ENCODE measurements at regions of chr17 and their contacts with region 1.

Region 1: DNA sequence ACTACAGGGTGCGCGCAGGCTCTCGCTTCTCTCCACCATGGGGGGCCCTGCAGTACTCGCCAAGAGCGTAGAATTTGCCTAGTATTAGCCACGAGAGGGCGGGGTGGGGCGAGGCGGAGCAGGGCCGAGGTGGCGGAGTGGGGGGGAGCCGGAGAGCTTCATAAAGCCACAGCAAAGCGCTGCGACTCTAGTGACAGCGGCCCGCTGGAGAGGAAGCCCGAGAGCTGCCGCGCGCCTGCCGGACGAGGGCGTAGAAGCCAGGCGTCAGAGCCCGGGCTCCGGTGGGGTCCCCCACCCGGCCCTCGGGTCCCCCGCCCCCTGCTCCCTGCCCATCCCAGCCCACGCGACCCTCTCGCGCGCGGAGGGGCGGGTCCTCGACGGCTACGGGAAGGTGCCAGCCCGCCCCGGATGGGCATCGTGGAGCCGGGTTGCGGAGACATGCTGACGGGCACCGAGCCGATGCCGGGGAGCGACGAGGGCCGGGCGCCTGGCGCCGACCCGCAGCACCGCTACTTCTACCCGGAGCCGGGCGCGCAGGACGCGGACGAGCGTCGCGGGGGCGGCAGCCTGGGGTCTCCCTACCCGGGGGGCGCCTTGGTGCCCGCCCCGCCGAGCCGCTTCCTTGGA is at the start of gene TBX21:
- DNase-seq: peak; percentile 83
- H3K4me3 Mint-ChIP-seq: peak within 1 kb of the TSS; percentile 100
- H3K27ac Mint-ChIP-seq: peak within 1 kb of the TSS; percentile 96
- H3K4me1 Mint-ChIP-seq: peaks cover 84% of the 10 kb centered on the region
- H3K27me3 Mint-ChIP-seq: no peaks in the 10 kb centered on the region
- total RNA-seq, gene TBX21: 89.8 and 90.8 TPM in 2 replicates

Region 2: DNA sequence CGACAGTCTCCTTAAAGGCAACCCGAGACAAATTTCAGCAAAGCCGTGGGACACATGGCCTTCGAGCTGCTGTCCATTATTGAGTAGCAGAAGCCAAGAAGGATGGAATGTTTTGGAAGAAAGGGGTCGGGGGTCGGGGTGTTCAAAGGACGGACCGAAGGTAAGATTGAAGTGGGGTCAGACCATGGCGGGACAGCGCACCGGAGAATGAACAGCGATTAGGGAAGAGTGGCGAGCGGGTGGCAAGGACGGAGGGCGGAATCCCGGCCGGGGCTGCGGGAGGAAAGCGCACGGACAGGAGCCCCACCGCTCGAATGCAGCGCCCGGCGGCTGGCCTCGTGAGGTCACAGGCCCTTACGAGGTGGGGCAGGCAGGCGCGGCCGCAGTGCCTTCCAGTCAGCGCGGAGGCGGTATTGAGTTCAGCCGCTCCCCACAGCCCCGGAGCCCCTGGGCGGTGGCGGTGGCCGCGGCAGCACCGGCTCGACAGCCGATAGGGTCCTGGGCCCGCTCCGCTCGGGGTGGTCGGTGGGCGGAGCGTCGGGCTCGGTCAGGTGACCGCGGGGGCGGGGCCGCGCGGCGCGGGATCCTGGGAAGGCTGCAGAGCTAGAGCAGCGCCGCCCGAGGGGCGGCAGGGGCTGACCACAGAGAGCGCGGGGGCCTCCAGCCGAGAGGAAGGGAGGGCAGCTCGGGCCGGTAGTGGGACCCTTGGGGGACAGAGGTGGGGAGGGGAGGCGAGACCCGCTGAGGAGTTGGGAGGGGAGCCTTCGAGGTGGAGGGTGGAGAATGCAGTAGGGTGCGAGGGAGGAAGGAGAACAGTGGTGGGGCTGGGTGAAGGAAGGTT is 409.6 kb before region 1 on chr17 and contains the start of gene EFCAB13:
- intact Hi-C with region 1: loop called (anchors 10 kb)
- DNase-seq: peak; percentile 77
- H3K4me3 Mint-ChIP-seq: peak within 1 kb of the TSS; percentile 96
- H3K27ac Mint-ChIP-seq: peak within 1 kb of the TSS; percentile 94
- H3K4me1 Mint-ChIP-seq: peaks cover 29% of the 10 kb centered on the region
- H3K27me3 Mint-ChIP-seq: peaks cover 22% of the 10 kb centered on the region
- total RNA-seq, gene EFCAB13: 2.4 and 2.8 TPM in 2 replicates

Region 3: DNA sequence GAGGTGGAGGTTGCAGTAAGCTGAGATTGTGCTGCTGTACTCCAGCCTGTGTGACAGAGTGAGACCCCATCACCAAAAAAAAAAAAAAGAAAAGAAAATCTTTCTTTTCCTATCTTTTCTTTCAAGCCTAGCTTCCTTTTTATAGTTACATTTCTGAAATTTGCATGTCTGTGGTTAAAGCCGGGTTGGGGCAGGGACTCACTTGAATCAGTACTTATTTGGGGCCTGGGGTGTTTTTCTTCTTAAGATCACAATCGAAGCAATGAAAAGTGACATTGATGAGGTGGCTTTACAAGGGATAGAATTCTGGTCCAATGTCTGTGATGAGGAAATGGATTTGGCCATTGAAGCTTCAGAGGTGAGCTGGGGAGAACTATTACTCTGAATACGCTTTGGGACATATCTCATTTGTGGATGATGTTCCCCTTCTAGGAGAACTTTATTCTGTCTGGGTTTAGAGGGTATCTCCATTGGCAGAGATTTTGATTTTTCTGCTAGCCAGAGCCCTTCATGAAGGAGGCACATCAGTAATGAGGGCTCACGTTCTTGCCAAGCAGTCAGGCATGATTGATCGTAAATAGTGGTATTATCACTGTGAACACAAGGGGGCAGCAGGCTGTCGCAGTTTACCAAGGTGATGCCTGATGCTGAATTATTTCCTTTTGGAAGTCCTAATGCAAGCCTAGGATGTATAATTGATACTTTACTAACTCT is 69.1 kb before region 1 on chr17:
- intact Hi-C with region 1: loop called (anchors 2 kb)
- DNase-seq: peak; percentile 43
- H3K4me3 Mint-ChIP-seq: peak overlapping the region; percentile 30
- H3K27ac Mint-ChIP-seq: peak overlapping the region; percentile 70
- H3K4me1 Mint-ChIP-seq: peaks cover 38% of the 10 kb centered on the region
- H3K27me3 Mint-ChIP-seq: no peaks in the 10 kb centered on the region

Region 4: DNA sequence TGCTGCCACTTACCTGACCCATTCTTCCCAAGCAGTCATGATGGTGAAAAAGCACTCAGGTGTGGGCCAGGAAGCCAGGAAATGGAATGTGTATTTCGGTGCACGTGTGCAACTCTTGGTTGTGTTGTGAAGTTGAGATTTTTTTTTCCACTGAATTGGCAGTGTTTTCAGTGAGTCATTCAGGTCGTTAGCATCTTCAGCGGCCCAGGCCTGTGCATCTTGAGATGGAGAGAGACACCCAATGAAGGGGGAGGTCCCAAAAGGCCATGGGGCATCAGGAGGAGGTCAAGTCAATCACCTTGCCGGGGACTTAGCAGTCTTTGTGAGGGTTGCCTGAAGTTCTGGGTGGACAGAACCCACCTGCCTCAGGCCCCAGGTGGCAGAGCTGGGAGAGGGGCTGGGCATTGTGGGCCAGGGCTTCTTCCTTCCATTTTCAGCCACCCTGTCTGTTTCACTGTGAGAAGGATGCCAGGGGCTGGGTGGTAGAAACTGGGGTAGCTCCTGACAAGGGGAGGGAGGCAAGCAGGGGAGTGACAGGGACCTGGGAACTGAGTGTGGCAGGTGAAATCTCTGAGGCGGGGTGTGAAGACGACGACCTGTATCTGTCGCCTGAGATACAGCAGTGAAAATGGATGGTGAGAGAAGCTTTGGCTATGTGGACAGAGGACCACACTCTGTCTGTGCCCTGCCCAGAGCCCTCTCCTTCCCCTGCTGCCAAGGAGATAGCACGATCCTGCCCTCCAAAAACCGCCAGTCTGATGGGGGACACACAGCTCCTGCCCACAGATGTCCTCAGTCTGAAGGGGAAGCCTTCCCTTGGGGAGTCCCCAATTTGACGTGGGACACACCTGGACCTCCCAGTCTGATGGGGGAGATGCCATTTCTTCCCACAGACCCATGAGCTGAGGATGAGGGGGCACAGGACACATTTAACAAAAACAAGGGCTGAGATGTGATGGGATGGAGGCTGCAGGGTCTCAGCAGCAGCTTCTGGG is 27.3 kb before region 1 on chr17:
- intact Hi-C with region 1: loop called (anchors 1 kb)
- DNase-seq: peak; percentile 44
- H3K4me3 Mint-ChIP-seq: peak overlapping the region; percentile 66
- H3K27ac Mint-ChIP-seq: peak overlapping the region; percentile 84
- H3K4me1 Mint-ChIP-seq: peaks cover 76% of the 10 kb centered on the region
- H3K27me3 Mint-ChIP-seq: no peaks in the 10 kb centered on the region

Region 5: GRCh38 chr17:47720754-47721533 is 12.2 kb before region 1 on chr17:
- intact Hi-C with region 1: loop called (anchors 1 kb)
- DNase-seq: peak; percentile 85
- H3K4me3 Mint-ChIP-seq: peak overlapping the region; percentile 78
- H3K27ac Mint-ChIP-seq: peak overlapping the region; percentile 95
- H3K4me1 Mint-ChIP-seq: peaks cover 83% of the 10 kb centered on the region
- H3K27me3 Mint-ChIP-seq: no peaks in the 10 kb centered on the region

Region 6: DNA sequence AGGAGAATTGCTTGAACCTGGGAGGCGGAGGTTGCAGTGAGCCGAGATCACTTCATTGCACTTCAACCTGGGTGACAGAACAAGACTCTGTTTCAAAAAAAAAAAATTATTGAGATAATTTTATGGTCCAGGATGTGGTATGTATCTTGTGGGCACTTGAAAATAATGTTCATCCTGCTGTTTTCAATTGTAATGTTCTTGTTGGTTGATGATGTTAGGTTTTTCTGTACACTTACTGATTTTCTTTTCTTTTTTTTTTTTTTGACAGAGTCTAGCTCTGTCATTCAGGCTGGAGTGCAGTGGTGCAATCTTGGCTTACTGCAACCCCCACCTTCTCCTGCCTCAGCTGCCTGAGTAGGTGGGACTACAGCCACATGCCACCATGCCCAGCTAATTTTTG is 29.6 kb after region 1 on chr17:
- intact Hi-C with region 1: no loop called
- DNase-seq: no peak
- H3K4me3 Mint-ChIP-seq: no peak overlapping the region
- H3K27ac Mint-ChIP-seq: no peak overlapping the region
- H3K4me1 Mint-ChIP-seq: peaks cover 6% of the 10 kb centered on the region
- H3K27me3 Mint-ChIP-seq: peaks cover 43% of the 10 kb centered on the region